ENCODE measurements at regions of chr7 and their contacts with region 1.

Region 1: GRCh38 chr7:30062591-30062990 is 34.4 kb downstream of the PLEKHA8 start:
- DNase-seq: no peak
- H3K4me3 Mint-ChIP-seq: no peak overlapping the region
- H3K27ac Mint-ChIP-seq: no peak overlapping the region
- H3K4me1 Mint-ChIP-seq: no peaks in the 10 kb centered on the region
- H3K27me3 Mint-ChIP-seq: no peaks in the 10 kb centered on the region

Region 2: DNA sequence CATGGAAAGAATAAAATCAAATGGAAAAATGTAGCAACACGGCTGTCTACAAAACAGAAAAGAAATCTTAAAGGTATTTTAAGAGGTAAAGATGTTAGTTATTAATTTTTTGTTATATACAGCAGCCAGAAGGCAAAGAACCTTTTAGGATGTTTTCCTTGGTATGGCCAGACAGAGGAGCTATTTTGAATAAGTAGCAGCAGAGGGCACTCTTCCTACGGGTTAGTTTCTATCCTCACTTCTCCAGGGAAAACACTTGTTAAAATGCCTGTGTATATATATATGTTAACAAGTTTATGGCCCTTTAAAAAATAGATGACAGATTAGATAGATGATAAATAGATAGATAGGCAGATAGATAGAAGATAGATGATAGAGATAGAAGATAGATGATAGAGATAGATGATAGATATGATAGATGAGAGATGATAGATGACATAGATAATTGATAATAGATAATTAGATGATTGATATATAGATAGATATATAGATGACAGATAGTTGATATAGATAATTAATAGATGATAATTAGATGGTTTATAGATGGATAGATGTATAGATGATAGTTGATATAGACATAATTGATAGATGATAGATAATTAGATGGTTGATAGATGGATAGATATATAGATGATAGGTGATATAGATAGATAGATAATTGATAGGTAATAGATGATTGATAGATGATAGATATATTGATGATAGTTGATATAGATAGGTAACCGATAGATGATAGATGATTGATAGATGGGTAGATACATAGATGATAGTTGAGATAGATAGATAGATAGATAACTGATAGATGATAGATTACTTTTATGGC is 314.1 kb before region 1 on chr7:
- CTCF ChIA-PET with region 1: interaction called, 5 read pairs
- POLR2A ChIA-PET with region 1: interaction called, 5 read pairs
- intact Hi-C with region 1: loop called (anchors 5 kb)
- DNase-seq: no peak
- H3K4me3 Mint-ChIP-seq: no peak overlapping the region
- H3K27ac Mint-ChIP-seq: no peak overlapping the region
- H3K4me1 Mint-ChIP-seq: no peaks in the 10 kb centered on the region
- H3K27me3 Mint-ChIP-seq: no peaks in the 10 kb centered on the region

Region 3: DNA sequence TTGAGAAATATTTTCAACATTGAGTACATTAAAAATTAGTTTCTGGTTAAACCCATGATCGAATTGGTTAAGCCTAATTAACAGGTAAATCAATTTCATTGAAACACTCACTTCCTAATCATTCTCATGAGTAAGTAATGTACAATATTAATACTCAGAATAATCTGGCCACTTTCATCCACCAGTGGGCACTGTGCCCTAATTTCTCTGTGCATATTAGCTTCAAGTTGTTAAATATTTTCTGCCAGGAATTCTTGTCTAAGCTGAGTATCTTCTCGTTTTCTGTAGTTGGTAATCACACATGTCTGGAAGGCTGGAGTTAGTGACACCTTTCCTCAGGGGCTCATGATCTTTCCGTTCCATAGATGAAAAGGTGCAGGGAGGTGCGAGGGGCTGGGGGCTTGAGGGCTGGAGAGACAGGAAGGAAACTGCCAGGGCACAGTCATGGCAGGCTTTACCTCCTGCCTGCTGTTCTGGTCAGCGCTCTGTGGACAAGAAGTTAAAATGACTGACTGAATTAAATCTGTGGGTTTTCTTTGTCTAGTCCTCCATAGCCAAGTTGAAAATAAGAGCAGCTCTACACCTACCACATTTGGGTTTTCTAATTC is 184.4 kb before region 1 on chr7:
- CTCF ChIA-PET with region 1: interaction called, 3 read pairs
- POLR2A ChIA-PET with region 1: no interaction called
- intact Hi-C with region 1: loop called (anchors 1 kb)
- DNase-seq: peak; percentile 16
- H3K4me3 Mint-ChIP-seq: no peak overlapping the region
- H3K27ac Mint-ChIP-seq: no peak overlapping the region
- H3K4me1 Mint-ChIP-seq: peaks cover 5% of the 10 kb centered on the region
- H3K27me3 Mint-ChIP-seq: peaks cover 11% of the 10 kb centered on the region

Region 4: DNA sequence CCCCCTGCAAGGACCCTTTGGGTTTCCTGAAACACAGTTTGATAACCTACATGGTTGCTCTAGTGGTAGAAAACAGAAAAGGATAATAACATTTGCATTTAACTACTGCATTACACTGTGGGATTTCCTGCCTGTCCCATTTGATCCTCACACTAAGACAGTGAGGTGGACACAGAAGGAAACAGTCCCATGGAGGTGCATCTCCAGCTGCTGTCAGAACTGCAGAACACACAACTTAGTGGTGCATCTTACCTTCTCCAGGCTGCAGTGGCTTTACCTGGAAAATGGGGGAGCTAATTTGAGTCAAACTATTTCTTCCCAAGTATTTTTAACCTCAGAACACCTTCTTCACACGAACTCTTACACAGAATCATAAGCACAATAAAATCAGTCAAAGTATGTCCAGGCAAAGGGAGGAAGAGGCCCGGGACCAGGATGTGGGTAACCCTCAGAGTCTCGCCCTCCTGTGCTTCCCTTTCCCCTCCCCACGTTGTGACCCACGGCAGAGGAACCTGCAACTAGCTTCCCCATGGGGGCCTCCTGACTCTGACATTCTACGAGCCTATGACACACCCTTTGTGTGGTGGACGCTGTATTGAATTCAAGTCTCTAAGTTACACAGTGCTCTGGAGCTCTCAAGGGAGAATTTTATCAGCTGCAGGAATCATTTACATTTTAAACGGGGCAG is 106.6 kb before region 1 on chr7:
- CTCF ChIA-PET with region 1: interaction called, 4 read pairs
- POLR2A ChIA-PET with region 1: no interaction called
- intact Hi-C with region 1: loop called (anchors 10 kb)
- DNase-seq: peak; percentile 33
- H3K4me3 Mint-ChIP-seq: no peak overlapping the region
- H3K27ac Mint-ChIP-seq: no peak overlapping the region
- H3K4me1 Mint-ChIP-seq: peaks cover 10% of the 10 kb centered on the region
- H3K27me3 Mint-ChIP-seq: peaks cover 9% of the 10 kb centered on the region

Region 5: DNA sequence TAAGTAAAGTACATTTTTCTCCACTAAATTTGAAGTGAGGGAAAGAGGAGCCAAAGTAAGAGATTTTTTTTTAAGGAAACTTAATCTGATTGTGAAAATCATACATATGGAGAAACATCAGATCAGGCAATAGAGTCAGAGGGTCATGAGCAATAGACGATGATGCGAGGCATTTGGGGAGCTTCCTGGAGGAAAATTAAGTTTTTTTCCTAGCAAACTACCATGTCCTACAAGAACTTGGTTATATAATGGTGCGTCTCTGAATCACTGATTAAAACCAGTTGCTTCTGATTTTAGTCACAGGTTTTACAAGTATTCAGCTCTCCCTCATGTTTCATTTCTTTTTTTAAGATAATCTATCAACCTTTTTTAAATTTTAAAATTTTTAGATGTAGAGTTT is 20.1 kb after region 1 on chr7:
- CTCF ChIA-PET with region 1: no interaction called
- POLR2A ChIA-PET with region 1: no interaction called
- intact Hi-C with region 1: no loop called
- DNase-seq: no peak
- H3K4me3 Mint-ChIP-seq: no peak overlapping the region
- H3K27ac Mint-ChIP-seq: no peak overlapping the region
- H3K4me1 Mint-ChIP-seq: no peaks in the 10 kb centered on the region
- H3K27me3 Mint-ChIP-seq: no peaks in the 10 kb centered on the region